ENCODE measurements at regions of chr3 and their contacts with region 1.

Region 1: GRCh38 chr3:189967254-189967865 is 153.3 kb downstream of the P3H2 start:
- DNase-seq: no peak
- H3K4me3 ChIP-seq: no peak overlapping the region
- H3K27ac ChIP-seq: no peak overlapping the region
- H3K4me1 ChIP-seq: no peaks in the 10 kb centered on the region
- H3K27me3 ChIP-seq: no peaks in the 10 kb centered on the region
- CTCF ChIP-seq: peak; percentile 81 to 88

Region 2: GRCh38 chr3:190204200-190204599 is 236.8 kb after region 1 on chr3:
- intact Hi-C with region 1: loop called (anchors 5 kb)
- DNase-seq: no peak
- H3K4me3 ChIP-seq: no peak overlapping the region
- H3K27ac ChIP-seq: no peak overlapping the region
- H3K4me1 ChIP-seq: no peaks in the 10 kb centered on the region
- H3K27me3 ChIP-seq: no peaks in the 10 kb centered on the region
- CTCF ChIP-seq: no peak

Region 3: DNA sequence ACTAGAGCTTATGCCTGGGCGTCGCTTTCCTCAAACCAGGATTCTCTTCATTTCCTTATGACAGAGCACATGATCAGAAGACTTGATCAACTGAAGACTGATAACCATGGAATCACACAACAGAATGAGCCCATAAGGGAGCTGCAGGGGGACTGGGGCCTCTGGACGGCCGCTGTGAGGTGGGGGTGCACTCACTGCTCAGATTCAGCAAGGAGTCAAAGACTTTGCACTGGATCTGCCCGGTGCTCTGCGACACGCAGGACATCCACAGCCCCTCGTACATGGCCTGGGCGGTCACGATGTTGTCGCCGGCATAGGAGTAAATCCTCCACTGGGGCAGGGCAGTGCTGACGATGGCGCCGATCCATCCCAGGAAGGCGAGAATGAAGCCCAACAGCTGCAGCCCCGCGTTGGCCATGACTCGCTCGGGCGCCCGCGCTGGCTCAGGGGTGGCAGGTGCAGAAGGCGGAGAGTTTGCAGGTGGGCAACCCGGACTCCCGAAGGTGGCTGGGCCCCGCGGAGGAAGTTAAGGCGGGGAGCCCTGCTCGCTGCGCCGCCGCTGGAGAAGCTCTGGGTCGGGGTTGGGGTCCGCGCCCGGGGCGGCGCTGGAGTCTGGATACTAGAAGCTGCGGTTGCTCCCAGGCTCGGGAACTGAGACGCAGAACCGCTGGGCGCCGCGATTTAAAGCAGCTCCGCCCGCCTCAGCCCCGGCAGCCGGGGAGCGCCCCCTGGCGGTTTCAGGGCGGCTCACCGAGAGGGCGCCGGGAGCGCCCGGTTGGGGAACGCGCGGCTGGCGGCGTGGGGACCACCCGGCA is 354.6 kb after region 1 on chr3 and contains the start of gene CLDN1:
- intact Hi-C with region 1: loop called (anchors 5 kb)
- DNase-seq: peak; percentile 77 to 85
- H3K4me3 ChIP-seq: peak within 1 kb of the TSS; percentile 54 to 69
- H3K27ac ChIP-seq: no peak within 1 kb of the TSS
- H3K4me1 ChIP-seq: peaks cover 0 to 25% (median 14%) of the 10 kb centered on the region in 4 donors
- H3K27me3 ChIP-seq: peaks cover 0 to 5% of the 10 kb centered on the region in 2 donors
- CTCF ChIP-seq: peak; percentile 87 to 96

Measured in tibial artery (tissue), 4 donors.